ENCODE measurements at regions of chr1 and their contacts with region 1.

Region 1: GRCh38 chr1:23216771-23217420 is 406 bp downstream of the HTR1D start:
- DNase-seq: no peak
- ATAC-seq: peak; percentile 85
- H3K4me3 ChIP-seq: peak overlapping the region; percentile 57 to 71 (median 64)
- H3K27ac ChIP-seq: no peak overlapping the region
- H3K4me1 ChIP-seq: peaks cover 24% of the 10 kb centered on the region
- H3K27me3 ChIP-seq: peaks cover 3 to 5% of the 10 kb centered on the region in 2 experiments; a peak in 3 of 5 replicates
- CTCF ChIP-seq: peak; percentile 72
- EP300 ChIP-seq: no peak
- POLR2A ChIP-seq: no peak
- RAD21 ChIP-seq: peak; percentile 93

Region 2: DNA sequence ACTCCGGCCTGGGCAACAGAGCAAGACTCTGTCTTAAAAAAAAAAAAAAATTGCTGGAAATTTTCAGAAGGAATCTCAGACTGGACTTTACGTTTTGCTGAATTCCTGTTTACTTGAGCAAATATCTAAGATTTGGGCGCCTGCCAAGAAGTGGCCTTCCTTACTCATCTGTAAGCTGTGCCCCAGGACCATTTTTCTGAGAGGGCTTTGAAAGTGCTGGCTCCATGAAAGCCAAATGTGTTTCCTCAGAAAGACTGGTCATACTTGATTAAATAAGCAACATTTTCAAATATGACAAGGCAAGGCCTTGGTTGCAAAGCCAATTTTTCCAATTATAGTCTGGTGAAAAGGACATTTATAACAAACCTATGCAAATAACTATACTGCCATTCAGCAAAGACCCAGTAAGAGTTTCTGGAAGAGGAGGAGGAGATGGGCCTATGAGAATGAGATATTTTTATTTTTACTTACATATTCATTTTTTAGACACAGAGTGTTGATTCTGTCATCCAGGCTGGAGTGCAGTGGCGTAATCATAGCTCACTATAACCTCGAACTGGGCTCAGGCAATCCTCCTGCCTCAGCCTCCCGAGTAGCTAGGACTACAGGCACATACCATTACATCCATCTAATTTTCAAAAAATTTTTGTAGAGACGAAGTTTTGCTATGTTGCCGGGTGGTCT is 56.7 kb after region 1 on chr1:
- CTCF ChIA-PET with region 1: no interaction called
- POLR2A ChIA-PET with region 1: no interaction called
- in situ Hi-C with region 1: no loop called
- intact Hi-C with region 1: loop called (anchors 10 kb)
- DNase-seq: peak; percentile 23
- ATAC-seq: no peak
- H3K4me3 ChIP-seq: no peak overlapping the region
- H3K27ac ChIP-seq: no peak overlapping the region
- H3K4me1 ChIP-seq: peaks cover 10% of the 10 kb centered on the region
- H3K27me3 ChIP-seq: no peaks in the 10 kb centered on the region; a peak in 1 of 5 replicates
- CTCF ChIP-seq: no peak
- EP300 ChIP-seq: no peak
- POLR2A ChIP-seq: no peak
- RAD21 ChIP-seq: no peak

Region 3: DNA sequence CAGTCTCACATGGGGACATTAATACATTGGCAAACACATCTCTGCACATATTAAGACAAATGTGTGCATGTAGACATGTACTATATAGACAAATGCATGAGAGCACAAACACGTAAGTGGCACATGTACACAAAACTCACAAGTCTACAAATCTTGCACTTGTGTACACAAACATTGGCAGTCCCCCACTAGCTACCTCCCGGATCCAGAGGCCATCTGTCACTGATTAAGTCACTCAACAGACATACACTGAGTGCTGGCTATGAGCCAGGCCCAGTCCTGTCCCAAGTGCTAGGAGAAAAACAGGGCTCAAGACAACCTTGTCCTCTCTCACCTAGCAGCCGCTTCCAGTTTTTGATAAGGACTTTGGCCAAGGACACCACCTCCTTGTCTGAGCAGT is 200.7 kb after region 1 on chr1:
- CTCF ChIA-PET with region 1: no interaction called
- POLR2A ChIA-PET with region 1: no interaction called
- in situ Hi-C with region 1: no loop called
- intact Hi-C with region 1: no loop called
- DNase-seq: peak; percentile 56
- ATAC-seq: peak; percentile 56
- H3K4me3 ChIP-seq: no peak overlapping the region
- H3K27ac ChIP-seq: peak overlapping the region; percentile 23
- H3K4me1 ChIP-seq: peaks cover 53% of the 10 kb centered on the region
- H3K27me3 ChIP-seq: no peaks in the 10 kb centered on the region
- CTCF ChIP-seq: no peak
- EP300 ChIP-seq: no peak
- POLR2A ChIP-seq: no peak
- RAD21 ChIP-seq: no peak